ENCODE measurements at regions of chr22 and their contacts with region 1.

Region 1: GRCh38 chr22:32991353-32992121 is 66.6 kb downstream of the SYN3 start:
- DNase-seq: no peak
- ATAC-seq: no peak
- H3K4me3 ChIP-seq: no peak overlapping the region
- H3K27ac ChIP-seq: no peak overlapping the region
- H3K4me1 ChIP-seq: no peaks in the 10 kb centered on the region
- H3K27me3 ChIP-seq: peaks cover 0 to under 1% of the 10 kb centered on the region in 2 experiments; a peak in 3 of 5 replicates
- CTCF ChIP-seq: no peak
- EP300 ChIP-seq: no peak
- POLR2A ChIP-seq: no peak
- RAD21 ChIP-seq: no peak

Region 2: GRCh38 chr22:32649515-32650200 is 341.9 kb before region 1 on chr22:
- CTCF ChIA-PET with region 1: no interaction called
- POLR2A ChIA-PET with region 1: no interaction called
- in situ Hi-C with region 1: loop called (anchors 10 kb)
- intact Hi-C with region 1: no loop called
- DNase-seq: peak; percentile 11 to 76 (median 45)
- ATAC-seq: peak; percentile 86
- H3K4me3 ChIP-seq: no peak overlapping the region
- H3K27ac ChIP-seq: peak overlapping the region; percentile 23; the same call in 1 of the 3 replicates
- H3K4me1 ChIP-seq: peaks cover 3 to 26% of the 10 kb centered on the region in 2 experiments; a peak in 4 of 5 replicates
- H3K27me3 ChIP-seq: no peaks in the 10 kb centered on the region
- CTCF ChIP-seq: no peak
- EP300 ChIP-seq: 0 out of 2 replicates have a peak, but pooled peaks have one; percentile 29
- POLR2A ChIP-seq: no peak
- RAD21 ChIP-seq: no peak

Measured in K562 (cell line).